ENCODE measurements at regions of chr3 and their contacts with region 1.

Region 1: GRCh38 chr3:45026957-45027356 is 854 bp downstream of the CLEC3B start:
- DNase-seq: peak; percentile 86 to 92
- ATAC-seq: peak; percentile 76 to 89 (median 85)
- H3K4me3 ChIP-seq: peak overlapping the region; percentile 33 to 65 (median 52)
- H3K27ac ChIP-seq: peak overlapping the region; percentile 49 to 90 (median 84)
- H3K4me1 ChIP-seq: peaks cover 9 to 85% (median 51%) of the 10 kb centered on the region in 9 donors
- H3K27me3 ChIP-seq: no peaks in the 10 kb centered on the region
- CTCF ChIP-seq: no peak

Region 2: GRCh38 chr3:44992555-44993470 is 34.1 kb before region 1 on chr3:
- intact Hi-C with region 1: loop called in 1 of 10 experiments (anchors 5 kb)
- DNase-seq: no peak
- ATAC-seq: peak in 1 of 8 donors; percentile 35
- H3K4me3 ChIP-seq: no peak overlapping the region
- H3K27ac ChIP-seq: peak overlapping the region in 4 of 10 donors; percentile 26 to 63 (median 32)
- H3K4me1 ChIP-seq: peaks cover 12 to 72% (median 35%) of the 10 kb centered on the region in 9 donors
- H3K27me3 ChIP-seq: no peaks in the 10 kb centered on the region
- CTCF ChIP-seq: peak; percentile 32 to 73 (median 61)

Region 3: GRCh38 chr3:45011756-45012508 is 15.0 kb before region 1 on chr3:
- intact Hi-C with region 1: loop called in 1 of 10 experiments (anchors 1 kb)
- DNase-seq: peak; percentile 64 to 79
- ATAC-seq: peak; percentile 77 to 94 (median 86)
- H3K4me3 ChIP-seq: peak overlapping the region in 2 of 10 donors; percentile 3 to 17
- H3K27ac ChIP-seq: peak overlapping the region; percentile 67 to 91 (median 84)
- H3K4me1 ChIP-seq: peaks cover 11 to 61% (median 33%) of the 10 kb centered on the region in 9 donors
- H3K27me3 ChIP-seq: no peaks in the 10 kb centered on the region
- CTCF ChIP-seq: no peak

Measured in heart right ventricle (tissue), 16 donors.